ENCODE measurements at regions of chr6 and their contacts with region 1.

Region 1: GRCh38 chr6:147506704-147507114 is 1.8 kb upstream of the SAMD5 start:
- DNase-seq: peak; percentile 68 to 86
- H3K4me3 ChIP-seq: peak overlapping the region; percentile 79
- H3K4me3 Mint-ChIP-seq: peak overlapping the region; percentile 87
- H3K27ac Mint-ChIP-seq: no peak overlapping the region
- H3K4me1 ChIP-seq: peaks cover 8% of the 10 kb centered on the region; the same call in 1 of the 2 replicates
- H3K4me1 Mint-ChIP-seq: peaks cover 17% of the 10 kb centered on the region
- H3K27me3 ChIP-seq: no peaks in the 10 kb centered on the region; the same call in 1 of the 2 replicates
- H3K27me3 Mint-ChIP-seq: no peaks in the 10 kb centered on the region
- CTCF ChIP-seq: peak; percentile 82 to 85

Region 2: GRCh38 chr6:147390909-147391536 is 115.7 kb before region 1 on chr6:
- CTCF ChIA-PET with region 1: no interaction called
- POLR2A ChIA-PET with region 1: no interaction called
- intact Hi-C with region 1: loop called (anchors 2 kb)
- DNase-seq: peak in 1 of 2 experiments; percentile 25
- H3K4me3 ChIP-seq: no peak overlapping the region
- H3K4me3 Mint-ChIP-seq: no peak overlapping the region
- H3K27ac Mint-ChIP-seq: no peak overlapping the region
- H3K4me1 ChIP-seq: no peaks in the 10 kb centered on the region
- H3K4me1 Mint-ChIP-seq: no peaks in the 10 kb centered on the region
- H3K27me3 ChIP-seq: no peaks in the 10 kb centered on the region
- H3K27me3 Mint-ChIP-seq: no peaks in the 10 kb centered on the region
- CTCF ChIP-seq: peak; percentile 31 to 36

Region 3: DNA sequence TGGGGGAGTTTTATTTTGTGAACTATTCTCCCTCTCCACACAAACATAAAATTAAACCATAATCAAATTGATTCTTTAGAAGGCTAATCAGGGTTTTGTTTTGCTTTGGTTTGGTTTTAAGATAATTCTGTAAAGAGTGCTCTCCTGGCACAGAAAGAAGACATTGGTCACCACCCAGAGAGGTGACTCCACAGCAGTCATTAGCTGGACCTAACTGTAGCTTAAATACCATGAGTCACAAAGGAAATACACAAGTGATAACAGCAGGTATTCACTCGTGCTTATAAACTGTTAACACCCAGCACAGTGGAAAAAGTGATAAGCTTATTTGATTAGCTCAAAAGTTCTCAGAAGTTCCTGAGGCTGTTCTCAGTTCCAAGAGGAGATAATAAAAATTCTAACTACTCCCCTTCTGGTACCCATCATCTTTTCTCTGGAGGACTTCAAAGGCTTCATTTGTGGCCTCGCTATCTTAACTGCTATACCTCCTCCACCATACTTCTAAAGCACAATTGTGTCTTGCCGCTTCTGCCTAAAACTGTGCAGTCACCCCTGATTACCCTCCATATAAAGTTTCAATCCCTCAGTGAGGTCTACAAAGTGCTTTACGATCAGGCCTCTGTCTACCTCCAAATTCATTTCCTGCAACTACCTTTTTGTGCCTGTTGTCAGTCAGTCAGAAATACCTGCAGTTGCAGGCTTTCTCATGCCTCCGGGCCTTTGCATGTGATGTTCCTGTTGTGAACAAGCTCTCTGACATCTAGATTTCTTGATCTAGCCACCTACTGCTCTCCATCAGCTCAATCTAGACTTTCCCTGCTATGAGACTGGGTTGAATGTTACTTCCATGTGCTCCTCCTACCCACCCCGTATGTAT is 202.9 kb after region 1 on chr6:
- CTCF ChIA-PET with region 1: no interaction called
- POLR2A ChIA-PET with region 1: no interaction called
- intact Hi-C with region 1: loop called (anchors 1 kb)
- DNase-seq: peak; percentile 46 to 65
- H3K4me3 ChIP-seq: no peak overlapping the region
- H3K4me3 Mint-ChIP-seq: peak overlapping the region; percentile 3
- H3K27ac Mint-ChIP-seq: peak overlapping the region; percentile 50
- H3K4me1 ChIP-seq: peaks cover 44% of the 10 kb centered on the region
- H3K4me1 Mint-ChIP-seq: peaks cover 37% of the 10 kb centered on the region
- H3K27me3 ChIP-seq: no peaks in the 10 kb centered on the region
- H3K27me3 Mint-ChIP-seq: no peaks in the 10 kb centered on the region
- CTCF ChIP-seq: no peak

Region 4: DNA sequence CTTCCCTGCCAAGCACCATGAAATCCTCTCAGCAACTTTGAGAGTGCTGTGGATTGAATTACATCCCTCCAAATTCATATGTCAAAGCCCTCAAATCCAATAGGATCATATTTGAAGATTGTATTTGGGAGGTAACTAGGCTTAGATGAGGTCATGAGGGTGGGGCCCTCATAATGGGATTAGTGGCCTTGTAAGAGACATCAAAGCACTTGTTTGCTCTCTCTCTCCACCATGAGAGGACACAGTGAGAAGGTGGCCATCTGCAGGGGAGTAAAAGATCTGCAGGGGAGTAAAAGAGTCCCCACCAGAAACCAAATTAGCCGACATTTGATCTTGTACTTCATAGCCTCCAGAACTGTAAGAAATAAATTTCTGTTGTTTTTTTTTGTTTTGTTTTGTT is 300.0 kb after region 1 on chr6:
- CTCF ChIA-PET with region 1: no interaction called
- POLR2A ChIA-PET with region 1: no interaction called
- intact Hi-C with region 1: loop called (anchors 10 kb)
- DNase-seq: no peak
- H3K4me3 ChIP-seq: no peak overlapping the region
- H3K4me3 Mint-ChIP-seq: no peak overlapping the region
- H3K27ac Mint-ChIP-seq: no peak overlapping the region
- H3K4me1 ChIP-seq: 0 out of 2 replicates have a peak, but pooled peaks cover 7% of the 10 kb centered on the region
- H3K4me1 Mint-ChIP-seq: peaks cover 7% of the 10 kb centered on the region
- H3K27me3 ChIP-seq: no peaks in the 10 kb centered on the region
- H3K27me3 Mint-ChIP-seq: no peaks in the 10 kb centered on the region
- CTCF ChIP-seq: no peak

Region 5: GRCh38 chr6:148103436-148103835 is 596.7 kb after region 1 on chr6:
- CTCF ChIA-PET with region 1: no interaction called
- POLR2A ChIA-PET with region 1: interaction called, 6 read pairs
- intact Hi-C with region 1: loop called (anchors 1 kb)
- DNase-seq: peak; percentile 38 to 46
- H3K4me3 ChIP-seq: peak overlapping the region; percentile 8; the same call in 1 of the 2 replicates
- H3K4me3 Mint-ChIP-seq: peak overlapping the region; percentile 65
- H3K27ac Mint-ChIP-seq: peak overlapping the region; percentile 72
- H3K4me1 ChIP-seq: peaks cover 54% of the 10 kb centered on the region
- H3K4me1 Mint-ChIP-seq: peaks cover 47% of the 10 kb centered on the region
- H3K27me3 ChIP-seq: no peaks in the 10 kb centered on the region
- H3K27me3 Mint-ChIP-seq: no peaks in the 10 kb centered on the region
- CTCF ChIP-seq: no peak

Region 6: GRCh38 chr6:148177589-148178233 is 671.0 kb after region 1 on chr6:
- CTCF ChIA-PET with region 1: interaction called, 10 read pairs
- POLR2A ChIA-PET with region 1: no interaction called
- intact Hi-C with region 1: no loop called
- DNase-seq: peak; percentile 45 to 69
- H3K4me3 ChIP-seq: no peak overlapping the region
- H3K4me3 Mint-ChIP-seq: no peak overlapping the region
- H3K27ac Mint-ChIP-seq: no peak overlapping the region
- H3K4me1 ChIP-seq: no peaks in the 10 kb centered on the region
- H3K4me1 Mint-ChIP-seq: no peaks in the 10 kb centered on the region
- H3K27me3 ChIP-seq: no peaks in the 10 kb centered on the region
- H3K27me3 Mint-ChIP-seq: no peaks in the 10 kb centered on the region
- CTCF ChIP-seq: peak; percentile 64 to 78

Measured in Caco-2 (cell line).